ENCODE measurements at regions of chr7 and their contacts with region 1.

Region 1: DNA sequence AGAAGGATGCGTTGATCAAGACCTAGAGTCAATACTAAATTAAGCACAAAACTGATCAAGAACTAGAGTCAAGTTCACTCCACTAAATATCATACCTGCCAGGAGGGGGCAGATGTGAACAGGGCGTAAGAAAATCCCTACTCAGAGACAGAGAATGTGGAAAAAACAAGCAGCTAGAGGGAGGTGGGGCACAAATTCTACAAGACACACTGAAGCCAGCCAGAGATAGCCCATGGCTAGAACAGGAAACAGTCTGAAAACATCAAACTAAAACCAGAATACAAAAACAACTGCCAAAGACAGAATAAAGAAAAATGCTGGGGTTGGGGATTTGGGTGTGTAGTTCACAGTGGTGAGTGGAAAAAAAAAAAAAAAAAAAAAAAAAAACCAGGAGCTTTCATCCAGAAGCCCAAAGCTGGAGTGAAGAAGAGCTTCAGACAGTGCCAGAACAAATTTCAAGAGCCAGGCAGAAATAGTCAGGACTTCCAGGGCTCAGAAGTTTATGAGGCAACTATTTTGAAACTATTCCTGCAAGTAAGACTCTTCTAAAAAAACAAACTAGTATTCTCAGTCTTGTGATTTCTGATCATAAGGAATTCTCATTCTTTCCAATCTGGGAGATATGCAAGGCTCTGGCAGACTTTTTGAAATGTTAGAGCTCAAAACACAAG is 118.3 kb downstream of the CCDC71L start:
- DNase-seq: peak; percentile 58
- ATAC-seq: peak; percentile 98
- H3K4me3 Mint-ChIP-seq: no peak overlapping the region
- H3K27ac Mint-ChIP-seq: peak overlapping the region; percentile 34; the same call in 1 of the 2 replicates
- H3K4me1 Mint-ChIP-seq: peaks cover 9% of the 10 kb centered on the region
- H3K27me3 Mint-ChIP-seq: no peaks in the 10 kb centered on the region
- CTCF ChIP-seq: peak; percentile 24; the same call in 1 of the 2 replicates

Region 2: DNA sequence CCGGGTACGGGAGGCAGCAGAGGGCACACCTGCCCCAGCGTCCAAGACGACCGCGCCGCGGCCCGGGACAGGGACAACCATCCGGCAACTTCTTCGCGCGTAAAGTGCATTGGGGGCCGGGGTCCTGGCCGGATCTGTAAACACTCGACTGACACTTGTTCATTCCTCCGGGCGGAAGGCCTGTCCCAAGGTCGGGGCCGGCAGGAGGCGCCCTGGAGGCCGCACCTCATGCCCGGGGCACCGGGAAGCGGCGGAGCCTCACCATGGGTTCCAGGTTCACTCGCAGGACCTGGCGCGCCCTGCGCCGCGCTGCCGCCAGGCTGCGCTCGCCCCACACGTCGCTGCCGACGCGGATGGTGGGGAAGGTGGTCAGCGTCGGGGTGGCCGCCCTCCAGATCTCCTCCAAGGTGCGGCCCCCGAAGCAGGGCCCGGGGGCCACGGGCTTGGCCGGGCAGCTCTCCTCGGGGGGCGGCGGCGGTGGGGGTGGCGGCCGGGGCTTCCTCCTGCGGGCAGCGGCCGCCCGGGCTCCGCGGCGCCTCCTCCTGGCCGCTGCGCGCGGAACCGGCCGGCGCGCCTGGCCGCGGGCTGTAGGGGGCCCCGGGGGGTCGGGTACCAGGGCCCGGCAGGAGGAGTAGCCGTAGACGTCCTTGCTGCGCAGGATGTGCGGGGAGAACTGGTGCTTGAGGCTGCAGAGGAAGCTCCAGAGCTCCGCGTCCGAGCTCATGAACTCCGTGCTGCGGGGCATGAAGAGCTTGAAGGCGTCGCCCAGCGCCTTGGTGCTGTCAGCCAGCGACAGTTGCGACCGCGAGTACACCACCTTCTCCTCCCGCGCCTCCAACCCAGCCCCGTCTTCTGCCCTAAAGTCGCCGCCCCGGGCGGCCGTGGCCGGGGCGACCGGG is 117.5 kb after region 1 on chr7:
- CTCF ChIA-PET with region 1: interaction called, 28 read pairs
- POLR2A ChIA-PET with region 1: interaction called, 6 read pairs
- DNase-seq: peak; percentile 91
- ATAC-seq: peak; percentile 76
- H3K4me3 Mint-ChIP-seq: peak overlapping the region; percentile 86
- H3K27ac Mint-ChIP-seq: no peak overlapping the region
- H3K4me1 Mint-ChIP-seq: peaks cover 16% of the 10 kb centered on the region
- H3K27me3 Mint-ChIP-seq: no peaks in the 10 kb centered on the region
- CTCF ChIP-seq: no peak; the same call in 1 of the 2 replicates

Region 3: DNA sequence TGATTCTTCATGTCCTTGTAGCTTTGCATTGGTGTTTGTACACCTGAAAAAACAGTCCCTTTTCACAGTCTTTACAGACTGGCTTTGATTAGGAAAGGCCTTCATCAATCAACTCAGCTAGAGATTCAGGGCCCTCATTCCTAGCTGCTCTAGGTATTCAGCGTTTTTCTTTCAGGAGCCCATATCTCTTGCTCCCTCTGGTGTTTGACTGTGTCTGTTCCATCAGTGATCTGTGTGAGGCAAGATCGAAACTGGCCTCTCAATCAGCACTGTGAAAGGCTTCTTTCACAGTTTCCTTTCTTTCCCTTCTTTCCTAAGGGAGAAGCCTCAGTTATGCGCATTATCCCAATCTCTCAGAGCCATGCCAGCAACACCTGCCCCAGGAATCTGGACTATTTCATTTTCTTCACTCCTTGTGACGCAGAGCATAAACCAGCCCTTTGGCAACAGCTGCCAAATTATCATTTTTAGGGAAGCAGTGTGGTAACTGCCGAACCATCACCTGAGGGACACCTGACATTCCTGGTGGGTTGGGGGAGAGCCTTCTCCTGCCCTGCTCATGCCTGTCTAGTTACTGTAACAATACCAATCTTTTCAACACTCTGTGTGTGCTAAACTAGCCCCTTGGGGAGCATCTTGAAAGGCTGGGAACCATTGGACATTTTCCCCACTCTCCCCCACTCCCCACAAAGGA is 194.0 kb after region 1 on chr7:
- CTCF ChIA-PET with region 1: interaction called, 62 read pairs
- POLR2A ChIA-PET with region 1: no interaction called
- DNase-seq: peak; percentile 30
- ATAC-seq: peak; percentile 98
- H3K4me3 Mint-ChIP-seq: no peak overlapping the region
- H3K27ac Mint-ChIP-seq: peak overlapping the region; percentile 93
- H3K4me1 Mint-ChIP-seq: peaks cover 15% of the 10 kb centered on the region
- H3K27me3 Mint-ChIP-seq: no peaks in the 10 kb centered on the region; the same call in 1 of the 2 replicates
- CTCF ChIP-seq: peak; percentile 32; the same call in 1 of the 2 replicates

Region 4: DNA sequence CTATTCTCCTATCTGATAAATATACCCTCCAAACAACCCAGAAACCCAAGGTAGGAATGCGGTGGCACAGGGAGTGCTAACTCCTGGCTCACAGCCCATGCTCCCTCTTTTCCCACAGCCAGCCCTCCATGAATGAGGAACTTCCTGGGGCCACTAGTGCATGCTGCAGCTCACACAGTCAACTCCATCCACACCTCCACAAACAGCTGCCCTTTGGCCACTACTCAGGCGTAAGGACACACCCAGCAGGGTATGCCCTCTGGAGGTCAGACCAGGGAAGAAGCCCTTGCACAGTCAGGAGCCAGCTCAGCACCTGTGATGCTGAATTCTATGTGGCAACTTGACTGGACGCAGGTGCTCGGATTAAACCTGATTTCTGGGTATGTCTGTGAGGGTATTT is 237.2 kb after region 1 on chr7:
- CTCF ChIA-PET with region 1: interaction called, 16 read pairs
- POLR2A ChIA-PET with region 1: interaction called, 3 read pairs
- DNase-seq: peak; percentile 64
- ATAC-seq: peak; percentile 100
- H3K4me3 Mint-ChIP-seq: no peak overlapping the region
- H3K27ac Mint-ChIP-seq: no peak overlapping the region
- H3K4me1 Mint-ChIP-seq: peaks cover 9% of the 10 kb centered on the region; the same call in 1 of the 2 replicates
- H3K27me3 Mint-ChIP-seq: no peaks in the 10 kb centered on the region
- CTCF ChIP-seq: no peak

Region 5: GRCh38 chr7:107014387-107015023 is 471.8 kb after region 1 on chr7:
- CTCF ChIA-PET with region 1: no interaction called
- POLR2A ChIA-PET with region 1: no interaction called
- DNase-seq: no peak
- ATAC-seq: peak; percentile 94
- H3K4me3 Mint-ChIP-seq: no peak overlapping the region
- H3K27ac Mint-ChIP-seq: no peak overlapping the region
- H3K4me1 Mint-ChIP-seq: peaks cover 23% of the 10 kb centered on the region
- H3K27me3 Mint-ChIP-seq: no peaks in the 10 kb centered on the region
- CTCF ChIP-seq: no peak